Esophagus squamous epithelium (tissue), 5 donors: ENCODE measurements at regions of chr15 and their contacts with region 1.

Region 1: GRCh38 chr15:55218056-55218455 is 21.3 kb upstream of the RSL24D1 start:
- DNase-seq: no peak
- H3K4me3 ChIP-seq: no peak overlapping the region
- H3K27ac ChIP-seq: peak overlapping the region in 1 of 4 donors; percentile 35
- H3K4me1 ChIP-seq: peaks cover 0 to 23% (median 3%) of the 10 kb centered on the region in 3 donors
- H3K27me3 ChIP-seq: no peaks in the 10 kb centered on the region
- CTCF ChIP-seq: no peak
- POLR2A ChIP-seq: no peak

Region 2: DNA sequence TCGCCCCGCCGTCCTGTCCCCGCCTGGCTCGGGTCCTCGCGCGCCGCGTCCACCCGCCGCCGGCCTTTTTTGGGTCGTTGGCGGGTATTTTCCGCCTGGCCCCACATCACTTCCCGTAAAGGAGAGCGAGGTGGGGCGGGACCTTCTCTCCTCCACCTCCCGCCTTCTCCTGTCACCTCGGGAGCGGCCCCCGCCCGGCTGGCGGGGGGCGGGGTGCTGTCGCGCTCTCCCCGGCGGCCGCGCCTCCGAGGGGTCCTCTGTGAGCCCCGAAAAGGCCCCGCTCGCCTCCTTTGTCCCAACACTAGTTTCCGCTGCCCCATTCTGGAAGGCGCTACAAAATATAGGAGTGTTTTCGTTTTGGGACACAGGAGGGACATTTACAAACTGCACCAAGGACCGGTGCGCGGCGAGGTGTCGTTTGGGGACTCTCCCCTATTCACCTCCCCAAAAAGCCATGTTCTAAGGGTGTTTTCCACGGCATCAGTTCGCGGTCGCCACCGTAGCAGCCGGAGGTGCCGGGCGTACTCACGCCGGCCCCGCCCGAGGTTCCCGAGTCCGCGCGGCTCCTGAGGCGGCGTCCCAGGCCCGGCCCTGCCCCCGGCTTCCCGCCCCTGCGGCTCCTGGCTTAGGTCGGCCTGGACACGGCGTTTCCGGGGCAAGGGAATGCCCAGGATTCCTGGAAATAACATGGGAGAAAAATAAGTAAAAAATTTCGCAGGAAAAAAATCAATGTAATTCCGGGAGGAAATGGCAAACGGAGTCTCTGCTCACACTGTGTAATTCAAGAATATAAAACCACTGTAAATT is 71.9 kb after region 1 on chr15 and contains the start of gene RAB27A:
- intact Hi-C with region 1: loop called (anchors 2 kb)
- DNase-seq: no peak
- H3K4me3 ChIP-seq: peak within 1 kb of the TSS; percentile 77 to 92 (median 78)
- H3K27ac ChIP-seq: peak within 1 kb of the TSS; percentile 92 to 96 (median 96)
- H3K4me1 ChIP-seq: peaks cover 0 to 31% (median 7%) of the 10 kb centered on the region in 3 donors
- H3K27me3 ChIP-seq: no peaks in the 10 kb centered on the region
- CTCF ChIP-seq: no peak
- POLR2A ChIP-seq: peak in 2 of 4 donors; percentile 37 to 40
- total RNA-seq, gene RAB27A: 8.7 to 16.2 (median 11.7) TPM

Region 3: GRCh38 chr15:55318588-55319494 is 100.8 kb after region 1 on chr15 and contains the starts of genes PIGB and PIGBOS1:
- intact Hi-C with region 1: no loop called
- DNase-seq: peak; percentile 51
- H3K4me3 ChIP-seq: peak within 1 kb of the TSS; percentile 52 to 95 (median 82)
- H3K27ac ChIP-seq: peak within 1 kb of the TSS; percentile 90 to 96 (median 94)
- H3K4me1 ChIP-seq: peaks cover 0 to 46% (median 18%) of the 10 kb centered on the region in 3 donors
- H3K27me3 ChIP-seq: no peaks in the 10 kb centered on the region
- CTCF ChIP-seq: peak in 2 of 6 experiments; percentile 28 to 29
- POLR2A ChIP-seq: peak in 2 of 4 donors; percentile 39 to 68
- total RNA-seq, gene PIGB: 5.9 to 16.5 (median 13.0) TPM
- total RNA-seq, gene PIGBOS1: 2.6 to 13.5 (median 9.9) TPM